PC-3 (cell line): ENCODE measurements at regions of chr3 and their contacts with region 1.

Region 1: DNA sequence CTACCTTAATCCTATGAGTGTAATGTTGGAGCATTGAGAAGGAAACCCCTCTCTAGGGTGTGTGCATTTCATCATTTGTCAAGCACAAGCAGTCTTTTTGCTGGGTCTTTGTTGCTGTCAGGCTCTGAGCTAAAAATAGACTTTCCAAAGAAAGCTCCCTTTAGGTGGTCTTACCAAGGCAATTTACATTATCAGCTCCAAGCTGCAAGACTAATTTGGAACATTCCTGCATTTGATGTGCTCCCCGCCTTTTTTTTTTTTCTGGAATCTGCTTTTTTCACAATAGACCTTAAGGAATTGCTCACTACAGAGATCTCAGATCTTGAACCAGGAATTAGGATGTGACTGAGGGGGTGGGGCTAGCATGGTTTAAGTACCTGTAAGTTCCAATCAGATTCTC is 60.6 kb upstream of the STAC start:
- DNase-seq: no peak
- ATAC-seq: no peak
- H3K4me3 ChIP-seq: no peak overlapping the region
- H3K27ac ChIP-seq: no peak overlapping the region
- H3K4me1 ChIP-seq: no peaks in the 10 kb centered on the region
- H3K27me3 ChIP-seq: no peaks in the 10 kb centered on the region
- CTCF ChIP-seq: no peak

Region 2: GRCh38 chr3:36332139-36332538 is 12.5 kb after region 1 on chr3:
- CTCF ChIA-PET with region 1: no interaction called
- POLR2A ChIA-PET with region 1: no interaction called
- intact Hi-C with region 1: loop called (anchors 1 kb)
- DNase-seq: no peak
- ATAC-seq: no peak
- H3K4me3 ChIP-seq: no peak overlapping the region
- H3K27ac ChIP-seq: no peak overlapping the region
- H3K4me1 ChIP-seq: no peaks in the 10 kb centered on the region
- H3K27me3 ChIP-seq: no peaks in the 10 kb centered on the region
- CTCF ChIP-seq: no peak